ENCODE measurements at regions of chr19 and their contacts with region 1.

Region 1: DNA sequence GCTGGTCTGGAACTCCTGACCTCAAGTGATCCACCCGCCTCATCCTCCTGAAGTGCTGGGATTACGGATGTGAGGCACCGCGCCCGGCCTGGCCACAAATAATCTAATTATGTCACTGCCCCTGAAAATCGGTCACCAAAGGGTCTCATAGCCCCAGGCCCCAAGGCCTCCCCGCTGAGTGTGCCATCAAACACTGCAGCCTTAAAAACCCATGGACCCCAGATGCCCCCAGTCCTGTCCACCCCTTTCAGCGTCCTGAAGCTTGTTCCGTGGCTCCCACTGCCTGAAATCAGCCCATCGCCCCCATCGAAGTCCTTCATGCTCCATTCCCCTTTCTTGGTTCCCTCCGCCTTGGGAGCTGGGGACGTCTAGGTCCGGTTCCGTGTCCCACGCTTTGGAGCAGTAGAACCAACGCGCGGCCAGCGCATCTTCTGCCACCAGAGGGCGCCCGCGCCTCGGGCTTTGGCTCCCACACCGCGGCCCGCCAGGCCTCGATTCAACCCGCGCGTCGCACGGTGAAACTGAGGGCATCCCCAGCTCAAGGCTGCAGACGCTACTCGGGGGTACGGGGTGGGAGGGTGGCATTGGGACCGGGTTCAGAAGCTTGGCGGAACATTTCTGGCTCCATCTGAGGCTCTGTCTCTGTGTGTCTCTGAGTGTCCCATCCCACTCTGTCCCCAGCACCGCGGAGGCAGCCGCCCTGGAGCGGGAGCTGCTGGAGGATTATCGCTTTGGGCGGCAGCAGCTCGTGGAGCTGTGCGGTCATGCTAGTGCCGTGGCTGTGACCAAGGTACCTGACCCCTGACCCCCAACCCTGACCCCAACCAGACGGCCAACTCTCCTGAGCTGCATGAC is 3.5 kb downstream of the YJEFN3 start:
- DNase-seq: peak; percentile 68 to 90 (median 86)
- H3K4me3 ChIP-seq: no peak overlapping the region
- H3K27ac ChIP-seq: no peak overlapping the region
- H3K4me1 ChIP-seq: peaks cover 0 to 1% of the 10 kb centered on the region in 2 donors
- H3K27me3 ChIP-seq: no peaks in the 10 kb centered on the region
- CTCF ChIP-seq: peak; percentile 84 to 97 (median 92)
- POLR2A ChIP-seq: no peak

Region 2: DNA sequence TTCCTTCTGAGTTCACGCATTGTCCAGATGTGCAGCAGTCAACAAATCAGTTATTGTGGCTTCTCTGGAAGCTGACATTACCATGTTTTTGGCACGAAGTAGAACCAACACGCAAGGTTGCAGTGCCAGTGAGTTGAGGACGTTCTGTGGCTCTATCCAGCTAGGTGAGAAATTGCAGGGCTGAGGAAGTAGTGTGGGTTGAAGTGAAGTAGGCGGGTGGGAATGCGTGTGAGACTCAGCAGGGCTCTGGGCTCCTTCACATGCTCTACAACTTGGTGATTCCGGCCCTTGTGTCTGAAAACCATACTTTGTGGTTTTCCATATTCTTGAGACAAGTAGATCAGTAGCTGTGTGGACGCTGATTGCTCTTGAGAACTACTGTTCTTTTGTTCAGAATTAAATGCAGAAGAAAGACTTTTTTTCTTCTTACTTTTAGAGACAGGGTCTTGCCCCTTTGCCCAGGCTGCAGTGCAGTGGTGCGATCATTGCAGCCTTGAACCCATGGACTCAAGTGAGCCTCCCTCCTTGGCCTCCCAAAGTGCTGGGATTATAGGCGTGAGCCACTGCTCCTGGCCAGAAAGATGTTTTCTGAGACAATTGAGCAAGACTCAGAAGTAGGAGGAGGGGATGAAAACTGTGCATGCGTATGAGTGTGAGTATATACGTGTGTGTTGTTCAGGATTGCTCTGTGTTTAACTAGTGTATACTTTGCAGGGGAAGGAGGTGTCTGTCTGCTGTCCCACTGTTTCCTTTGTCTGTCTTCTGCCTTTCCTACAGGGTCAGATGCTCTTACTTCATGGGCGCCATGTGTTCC is 80.5 kb before region 1 on chr19:
- intact Hi-C with region 1: no loop called
- DNase-seq: no peak
- H3K4me3 ChIP-seq: no peak overlapping the region
- H3K27ac ChIP-seq: no peak overlapping the region
- H3K4me1 ChIP-seq: peaks cover 13 to 25% of the 10 kb centered on the region in 2 donors
- H3K27me3 ChIP-seq: no peaks in the 10 kb centered on the region
- CTCF ChIP-seq: no peak
- POLR2A ChIP-seq: no peak

Region 3: GRCh38 chr19:19643158-19644053 is 111.2 kb after region 1 on chr19 and contains the start of gene GMIP:
- intact Hi-C with region 1: loop called (anchors 2 to 5 kb)
- DNase-seq: peak; percentile 57 to 83 (median 72)
- H3K4me3 ChIP-seq: peak within 1 kb of the TSS in 3 of 4 donors; percentile 20 to 91 (median 65)
- H3K27ac ChIP-seq: peak within 1 kb of the TSS in 3 of 5 donors; percentile 31 to 84 (median 32)
- H3K4me1 ChIP-seq: peaks cover 8 to 10% of the 10 kb centered on the region in 2 donors
- H3K27me3 ChIP-seq: no peaks in the 10 kb centered on the region
- CTCF ChIP-seq: peak; percentile 73 to 93 (median 82)
- POLR2A ChIP-seq: peak in 1 of 2 donors; percentile 15
- total RNA-seq, gene GMIP: 0.44 to 17.0 (median 10.3) TPM

Region 4: GRCh38 chr19:19956434-19957075 is 424.4 kb after region 1 on chr19:
- intact Hi-C with region 1: loop called (anchors 2 to 5 kb)
- DNase-seq: no peak
- H3K4me3 ChIP-seq: no peak overlapping the region
- H3K27ac ChIP-seq: no peak overlapping the region
- H3K4me1 ChIP-seq: no peaks in the 10 kb centered on the region
- H3K27me3 ChIP-seq: no peaks in the 10 kb centered on the region
- CTCF ChIP-seq: no peak
- POLR2A ChIP-seq: no peak